Transverse colon (tissue), 4 donors: ENCODE measurements at regions of chr6 and their contacts with region 1.

Region 1: DNA sequence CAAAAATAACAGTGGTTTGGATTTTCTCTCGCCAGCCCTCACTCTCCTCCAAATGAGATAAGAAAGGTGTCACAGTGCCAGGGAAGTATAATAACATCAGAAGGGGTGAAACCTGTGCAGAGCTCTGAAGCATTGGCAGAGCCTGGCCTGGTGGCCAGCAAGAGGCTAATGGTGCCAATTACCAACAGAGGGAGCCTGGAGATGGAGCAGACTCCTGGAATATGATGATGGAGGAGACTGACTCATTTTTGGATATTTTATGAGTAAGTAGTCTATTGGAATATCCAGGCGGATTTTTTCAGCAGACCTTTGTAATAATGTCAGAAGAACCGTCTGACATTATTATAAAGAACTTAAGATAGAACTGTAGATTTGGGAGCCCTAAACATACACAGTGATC is 442.6 kb upstream of the MARCKS start:
- DNase-seq: peak; percentile 23
- H3K4me3 ChIP-seq: no peak overlapping the region
- H3K27ac ChIP-seq: no peak overlapping the region
- H3K4me1 ChIP-seq: peaks cover 0 to 16% (median 10%) of the 10 kb centered on the region in 4 donors
- H3K27me3 ChIP-seq: no peaks in the 10 kb centered on the region
- CTCF ChIP-seq: peak; percentile 27 to 46 (median 33)
- EP300 ChIP-seq: no peak
- POLR2A ChIP-seq: no peak

Region 2: DNA sequence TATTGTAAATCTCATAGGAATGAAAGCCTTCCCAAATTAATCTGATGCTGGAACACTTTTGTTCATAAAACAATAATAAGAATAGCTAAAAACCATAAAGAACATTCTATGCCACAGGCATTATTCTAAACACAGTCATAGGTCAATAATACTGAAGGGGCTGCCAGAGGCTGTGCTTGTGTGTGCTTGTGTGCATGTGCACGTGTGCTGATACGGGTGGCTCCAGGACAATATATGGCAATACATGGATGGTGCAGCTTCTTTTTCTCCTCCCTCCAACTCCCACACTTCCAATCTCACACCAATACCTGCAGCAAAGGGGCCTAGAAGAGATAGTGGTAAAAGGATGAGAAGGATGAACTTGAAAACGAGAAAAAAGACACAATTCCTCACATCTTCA is 42.0 kb after region 1 on chr6:
- in situ Hi-C with region 1: no loop called
- intact Hi-C with region 1: loop called (anchors 1 kb)
- DNase-seq: no peak
- H3K4me3 ChIP-seq: no peak overlapping the region
- H3K27ac ChIP-seq: no peak overlapping the region
- H3K4me1 ChIP-seq: no peaks in the 10 kb centered on the region
- H3K27me3 ChIP-seq: no peaks in the 10 kb centered on the region
- CTCF ChIP-seq: no peak
- EP300 ChIP-seq: no peak
- POLR2A ChIP-seq: no peak

Region 3: DNA sequence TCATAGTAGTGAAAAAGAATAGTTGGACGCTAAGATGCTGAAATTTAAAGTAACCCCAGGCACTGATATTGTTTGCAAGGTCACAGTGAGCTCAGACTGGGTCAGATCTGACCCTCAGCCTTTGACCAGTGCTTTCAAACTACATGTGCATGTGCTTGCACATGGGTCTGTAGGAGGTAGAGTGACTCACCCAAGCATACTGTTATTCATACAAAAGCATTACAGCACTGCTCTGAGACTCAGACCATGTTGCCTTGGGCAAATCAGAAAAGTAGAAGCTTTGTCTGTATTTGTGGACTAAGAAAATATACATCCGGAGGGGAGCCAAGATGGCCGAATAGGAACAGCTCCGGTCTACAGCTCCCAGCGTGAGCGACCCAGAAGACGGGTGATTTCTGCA is 116.3 kb after region 1 on chr6:
- in situ Hi-C with region 1: no loop called
- intact Hi-C with region 1: no loop called
- DNase-seq: no peak
- H3K4me3 ChIP-seq: no peak overlapping the region
- H3K27ac ChIP-seq: no peak overlapping the region
- H3K4me1 ChIP-seq: no peaks in the 10 kb centered on the region
- H3K27me3 ChIP-seq: no peaks in the 10 kb centered on the region
- CTCF ChIP-seq: no peak
- EP300 ChIP-seq: no peak
- POLR2A ChIP-seq: no peak

Region 4: DNA sequence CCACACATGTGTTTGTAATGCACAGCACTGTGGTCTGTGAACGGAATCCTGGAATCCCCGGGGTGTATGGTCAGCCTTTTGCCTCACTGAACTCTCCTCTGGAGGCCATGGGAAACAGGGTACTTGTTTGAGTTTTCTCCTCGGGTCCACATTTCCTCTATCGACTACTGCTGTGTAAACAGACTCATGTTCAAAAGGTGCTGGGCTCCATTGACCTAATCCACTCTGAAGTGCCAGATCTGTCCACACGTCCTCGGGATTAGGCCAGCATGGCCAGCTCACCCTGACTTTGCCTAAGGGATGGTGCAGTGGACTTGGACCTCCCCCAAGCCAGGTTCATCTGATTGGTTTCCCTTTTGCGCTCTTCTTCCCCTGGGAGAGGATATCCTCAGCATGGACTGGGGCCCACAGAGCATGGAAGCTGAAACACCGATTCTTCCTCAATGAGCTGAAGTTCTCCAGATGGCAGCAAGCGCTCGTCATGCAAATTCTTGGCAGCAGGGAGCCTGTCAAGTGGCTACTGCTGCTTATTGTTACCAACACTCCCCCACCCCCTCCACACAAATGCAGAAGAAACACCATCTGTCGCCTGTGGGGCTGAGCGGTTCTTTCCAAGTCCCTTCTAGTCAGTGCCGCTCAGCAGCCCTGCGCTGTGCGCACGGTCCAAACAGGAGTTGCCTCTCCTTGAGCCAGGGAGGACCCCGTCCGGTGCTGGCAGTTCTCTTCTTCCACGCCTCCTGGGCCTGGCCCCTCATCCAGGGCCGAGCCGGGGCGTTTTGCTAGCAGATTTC is 150.1 kb after region 1 on chr6:
- in situ Hi-C with region 1: no loop called
- intact Hi-C with region 1: loop called (anchors 10 kb)
- DNase-seq: peak; percentile 65
- H3K4me3 ChIP-seq: peak overlapping the region in 2 of 4 donors; percentile 9 to 34
- H3K27ac ChIP-seq: peak overlapping the region; percentile 56 to 80 (median 78)
- H3K4me1 ChIP-seq: peaks cover 0 to 10% (median 0%) of the 10 kb centered on the region in 4 donors
- H3K27me3 ChIP-seq: no peaks in the 10 kb centered on the region
- CTCF ChIP-seq: peak in 2 of 5 experiments; percentile 17 to 38
- EP300 ChIP-seq: peak; percentile 86
- POLR2A ChIP-seq: no peak